A549 (cell line): ENCODE measurements at regions of chr11 and their contacts with region 1.

Region 1: DNA sequence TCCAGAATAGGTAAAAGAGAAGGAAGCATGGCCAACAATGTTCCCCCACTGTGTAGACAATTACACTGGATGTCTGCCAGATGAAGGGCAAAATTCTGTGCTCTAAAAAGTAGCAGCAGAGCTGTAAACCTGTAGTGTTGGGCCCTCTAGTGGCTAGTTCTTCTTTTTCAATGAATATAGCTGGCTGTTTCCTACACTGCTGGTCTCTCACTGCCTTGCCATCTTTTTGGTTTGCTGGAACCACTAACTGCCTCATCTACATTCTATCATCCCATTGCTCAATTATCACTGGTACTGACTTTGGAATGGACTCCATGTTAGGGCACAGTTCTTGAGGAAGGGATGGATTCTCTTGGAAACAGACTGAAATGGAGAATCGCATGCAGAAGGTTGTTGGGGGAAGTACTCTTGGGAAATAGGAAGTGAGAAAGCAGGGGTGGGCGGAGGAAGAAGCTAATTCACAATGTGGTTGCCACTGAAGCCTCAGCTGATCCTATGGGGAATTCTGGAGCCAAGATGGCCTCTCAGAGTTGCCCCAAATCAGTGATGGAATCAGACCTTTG is 17.9 kb downstream of the KCNE3 start:
- DNase-seq: peak; percentile 68 to 74
- ATAC-seq: peak; percentile 81 to 94
- H3K4me3 ChIP-seq: no peak overlapping the region
- H3K27ac ChIP-seq: peak overlapping the region; percentile 53 to 60; a peak in 5 of 6 replicates
- H3K4me1 ChIP-seq: peaks cover 12% of the 10 kb centered on the region
- CTCF ChIP-seq: peak; percentile 94
- EP300 ChIP-seq: no peak
- POLR2A ChIP-seq: no peak
- RAD21 ChIP-seq: peak; percentile 96 to 97

Region 2: DNA sequence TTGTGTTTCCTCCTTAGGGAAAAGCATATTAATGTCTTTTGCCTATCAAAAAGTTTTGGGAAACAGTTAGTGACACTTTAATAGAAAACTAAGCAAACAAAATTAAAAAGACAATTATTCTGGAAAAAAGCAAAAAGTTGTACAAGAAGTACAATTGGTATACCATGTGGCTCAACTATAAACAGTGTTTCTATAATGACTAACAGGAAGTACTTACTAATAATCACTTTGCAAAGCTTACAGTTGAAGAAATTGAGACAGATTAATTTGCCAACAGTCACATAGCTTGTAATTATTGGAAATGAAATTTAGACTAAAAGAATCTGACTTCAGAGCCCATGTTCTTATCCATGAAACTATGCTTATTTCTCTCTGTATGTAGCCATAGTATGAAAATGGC is 253.6 kb before region 1 on chr11:
- CTCF ChIA-PET with region 1: no interaction called
- POLR2A ChIA-PET with region 1: no interaction called
- DNase-seq: no peak
- ATAC-seq: no peak
- H3K4me3 ChIP-seq: no peak overlapping the region
- H3K27ac ChIP-seq: no peak overlapping the region
- H3K4me1 ChIP-seq: no peaks in the 10 kb centered on the region
- CTCF ChIP-seq: no peak
- EP300 ChIP-seq: no peak
- POLR2A ChIP-seq: no peak
- RAD21 ChIP-seq: no peak

Region 3: GRCh38 chr11:74380746-74381430 is 68.6 kb before region 1 on chr11:
- CTCF ChIA-PET with region 1: interaction called, 10 read pairs
- POLR2A ChIA-PET with region 1: no interaction called
- DNase-seq: peak in 1 of 2 experiments; percentile 16
- ATAC-seq: peak in 1 of 2 experiments; percentile 22; a peak in 3 of 6 replicates
- H3K4me3 ChIP-seq: no peak overlapping the region
- H3K27ac ChIP-seq: peak overlapping the region in 1 of 2 experiments; percentile 32; a peak in 3 of 6 replicates
- H3K4me1 ChIP-seq: peaks cover 42% of the 10 kb centered on the region
- CTCF ChIP-seq: no peak
- EP300 ChIP-seq: no peak
- POLR2A ChIP-seq: no peak
- RAD21 ChIP-seq: no peak

Region 4: DNA sequence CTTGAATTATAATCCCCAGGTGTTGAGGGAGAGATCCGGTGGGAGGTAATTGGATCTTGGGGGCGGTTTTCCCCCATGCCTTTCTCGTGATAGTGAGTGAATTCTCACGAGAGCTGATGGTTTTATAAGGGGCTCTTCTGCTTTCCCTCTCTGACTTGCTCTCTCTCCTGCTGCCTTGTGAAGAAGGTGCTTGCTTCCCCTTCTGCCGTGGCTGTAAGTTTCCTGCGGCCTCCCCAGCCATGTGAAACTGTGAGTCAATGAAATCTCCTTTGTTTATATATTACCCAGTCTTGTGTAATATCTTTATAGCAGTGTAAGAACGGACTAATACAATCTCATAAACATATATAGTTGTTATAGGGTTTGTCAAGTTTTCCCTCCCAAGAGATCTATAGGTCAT is 14.9 kb before region 1 on chr11:
- CTCF ChIA-PET with region 1: interaction called, 73 read pairs
- POLR2A ChIA-PET with region 1: no interaction called
- DNase-seq: no peak
- ATAC-seq: no peak
- H3K4me3 ChIP-seq: no peak overlapping the region
- H3K27ac ChIP-seq: 0 out of 6 replicates have a peak overlapping the region, but pooled peaks of 1 of the 2 experiments have one; percentile 27
- H3K4me1 ChIP-seq: peaks cover 18% of the 10 kb centered on the region
- CTCF ChIP-seq: no peak
- EP300 ChIP-seq: no peak
- POLR2A ChIP-seq: no peak
- RAD21 ChIP-seq: no peak

Region 5: DNA sequence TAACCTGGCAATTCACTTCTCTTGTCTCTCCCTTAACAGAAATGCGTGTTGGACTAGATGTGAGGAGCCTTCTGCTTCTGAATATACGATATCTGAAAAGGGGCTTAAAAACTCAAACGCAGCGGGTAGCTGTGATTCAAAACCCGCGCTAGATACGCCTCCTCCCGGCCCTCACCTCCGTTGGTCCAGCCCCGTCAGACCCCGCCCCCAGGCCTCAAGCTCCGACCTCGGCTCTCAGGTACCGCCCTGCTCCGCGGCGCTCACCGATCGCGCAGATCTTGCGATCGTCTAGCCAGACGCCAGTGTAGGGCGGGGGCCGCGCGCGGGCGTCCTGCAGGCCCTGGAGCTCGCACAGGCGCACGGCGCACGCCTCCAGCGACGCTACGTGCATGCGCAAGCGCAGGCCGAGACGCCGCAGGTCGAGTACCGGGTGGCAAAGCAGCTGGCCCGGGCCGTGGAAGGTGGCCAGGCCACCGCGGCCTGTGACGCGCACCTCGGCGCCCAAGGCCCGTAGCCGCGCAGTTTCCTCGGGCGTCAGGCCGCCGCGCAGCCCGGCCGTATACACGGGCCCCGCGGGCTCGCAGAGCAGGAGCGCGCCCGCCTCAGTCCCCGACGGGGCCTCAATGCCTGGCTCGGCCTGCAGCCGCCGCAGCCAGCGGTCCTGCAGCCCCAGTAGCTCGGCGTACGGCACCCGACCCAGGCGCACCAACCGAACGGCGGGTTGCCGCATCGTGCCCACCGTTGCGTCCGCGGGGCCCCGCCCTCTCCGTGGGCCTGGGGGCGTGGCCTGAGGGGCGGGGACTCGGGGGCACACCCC is 43.7 kb after region 1 on chr11 and contains the start of gene LIPT2:
- CTCF ChIA-PET with region 1: interaction called, 23 read pairs
- POLR2A ChIA-PET with region 1: interaction called, 20 read pairs
- DNase-seq: peak; percentile 81 to 99
- ATAC-seq: peak; percentile 95 to 98
- H3K4me3 ChIP-seq: peak within 1 kb of the TSS; percentile 62
- H3K27ac ChIP-seq: peak within 1 kb of the TSS; percentile 93 to 98
- H3K4me1 ChIP-seq: peaks cover 14% of the 10 kb centered on the region; the same call in 2 of the 3 replicates
- CTCF ChIP-seq: no peak
- EP300 ChIP-seq: no peak
- POLR2A ChIP-seq: peak; percentile 78
- RAD21 ChIP-seq: no peak
- polyA plus RNA-seq, gene LIPT2: 9.8 and 12.9 TPM in 2 replicates

Region 6: GRCh38 chr11:74559110-74559933 is 109.9 kb after region 1 on chr11:
- CTCF ChIA-PET with region 1: interaction called, 387 read pairs
- POLR2A ChIA-PET with region 1: no interaction called
- DNase-seq: no peak
- ATAC-seq: peak; percentile 34 to 48; a peak in 3 of 6 replicates
- H3K4me3 ChIP-seq: no peak overlapping the region
- H3K27ac ChIP-seq: peak overlapping the region in 1 of 2 experiments; percentile 37; a peak in 3 of 6 replicates
- H3K4me1 ChIP-seq: peaks cover 9% of the 10 kb centered on the region
- CTCF ChIP-seq: no peak
- EP300 ChIP-seq: no peak
- POLR2A ChIP-seq: no peak
- RAD21 ChIP-seq: no peak